ENCODE measurements at regions of chr4 and their contacts with region 1.

Region 1: DNA sequence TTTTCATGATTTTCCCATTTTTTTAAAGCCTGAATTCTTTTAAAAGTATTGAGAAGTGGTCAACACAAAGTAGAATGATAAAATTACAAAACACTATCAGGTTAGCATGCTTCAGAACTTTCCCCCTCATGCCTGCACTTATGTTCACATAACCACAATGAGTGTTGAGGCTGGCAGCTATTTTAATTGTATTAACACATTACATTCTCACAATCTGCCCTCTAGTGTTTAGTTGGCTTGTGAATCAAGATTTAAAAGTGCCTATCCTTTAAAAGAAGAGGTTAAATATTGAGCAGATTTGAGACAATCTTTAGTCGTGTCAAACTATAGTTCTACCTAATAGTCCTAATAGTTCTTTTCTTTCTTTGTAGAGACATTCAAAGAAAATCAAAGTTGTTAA is 93.6 kb upstream of the NAP1L5 start:
- DNase-seq: peak; percentile 42
- H3K4me3 ChIP-seq: no peak overlapping the region
- H3K27ac ChIP-seq: peak overlapping the region; percentile 94
- H3K4me1 ChIP-seq: peaks cover 30% of the 10 kb centered on the region
- H3K27me3 ChIP-seq: no peaks in the 10 kb centered on the region
- CTCF ChIP-seq: peak; percentile 31 to 36

Region 2: DNA sequence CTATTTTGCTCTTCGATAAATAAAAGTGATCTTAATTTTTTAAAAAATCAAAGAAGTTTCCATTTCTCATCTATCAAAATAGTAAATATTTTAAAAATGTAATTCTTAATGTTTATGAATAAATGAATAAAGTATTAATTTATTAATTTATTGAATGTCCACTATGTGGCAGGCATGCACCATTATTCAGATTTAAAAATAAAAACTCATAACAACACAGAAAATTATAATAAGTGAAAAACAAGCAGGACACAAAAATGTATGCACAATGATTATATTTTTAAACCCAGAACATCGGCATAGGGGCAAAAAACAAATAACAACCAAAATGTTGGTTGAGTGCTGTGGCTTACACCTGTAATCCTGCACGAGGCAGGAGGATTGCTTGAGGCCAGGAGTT is 262.4 kb before region 1 on chr4:
- CTCF ChIA-PET with region 1: no interaction called
- dilution Hi-C with region 1: no loop called
- in situ Hi-C with region 1: no loop called
- intact Hi-C with region 1: loop called (anchors 1 kb)
- DNase-seq: no peak
- H3K4me3 ChIP-seq: no peak overlapping the region
- H3K27ac ChIP-seq: no peak overlapping the region
- H3K4me1 ChIP-seq: peaks cover 27% of the 10 kb centered on the region
- H3K27me3 ChIP-seq: no peaks in the 10 kb centered on the region
- CTCF ChIP-seq: peak in 1 of 2 donors; percentile 9

Region 3: GRCh38 chr4:89661490-89661889 is 870.2 kb after region 1 on chr4:
- CTCF ChIA-PET with region 1: no interaction called
- dilution Hi-C with region 1: no loop called
- in situ Hi-C with region 1: no loop called
- intact Hi-C with region 1: no loop called
- DNase-seq: peak; percentile 86
- H3K4me3 ChIP-seq: peak overlapping the region in 1 of 3 experiments; percentile 26
- H3K27ac ChIP-seq: peak overlapping the region; percentile 94
- H3K4me1 ChIP-seq: peaks cover 52% of the 10 kb centered on the region
- H3K27me3 ChIP-seq: no peaks in the 10 kb centered on the region
- CTCF ChIP-seq: no peak